ENCODE measurements at regions of chr16 and their contacts with region 1.

Region 1: DNA sequence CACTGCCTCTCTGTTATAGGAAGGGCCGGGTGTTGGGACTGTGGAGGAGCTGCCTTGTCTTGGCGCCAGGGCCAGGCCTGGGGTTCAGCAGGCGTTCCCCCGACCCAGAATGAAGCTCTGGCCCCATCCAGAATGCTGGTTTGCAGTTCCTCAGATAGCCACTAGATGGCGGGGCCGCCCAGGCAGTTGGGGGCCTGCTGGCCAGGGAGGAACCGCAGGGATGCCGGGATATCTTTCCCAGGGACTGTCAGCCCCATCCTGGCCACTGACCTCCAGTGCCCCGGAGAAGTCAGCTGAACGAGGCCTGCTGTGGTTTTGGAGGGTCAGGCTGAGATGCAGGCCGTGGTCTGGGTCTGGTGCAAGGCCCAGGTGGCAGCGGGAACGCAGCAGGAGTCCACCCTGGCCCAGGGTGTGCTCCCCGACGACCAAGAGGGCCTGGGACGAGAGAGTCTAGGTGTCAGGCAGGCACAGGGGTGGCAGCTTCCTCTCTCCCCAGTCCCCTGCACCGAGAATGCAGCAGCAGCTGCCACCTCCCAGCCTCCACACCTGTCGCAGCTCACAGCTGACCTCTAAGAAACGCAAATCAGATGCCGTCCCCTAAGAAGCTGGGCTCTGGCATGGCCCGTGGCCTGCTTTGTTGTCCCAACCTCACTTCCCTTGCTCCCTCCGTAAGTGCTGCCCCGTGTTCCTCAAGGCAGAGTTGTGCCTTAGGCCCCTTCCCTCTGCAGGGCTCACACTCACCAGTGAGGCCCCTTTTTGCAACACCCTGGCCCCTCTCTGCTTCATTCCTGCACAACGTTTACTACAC is 51.2 kb downstream of the RMI2 start:
- DNase-seq: peak; percentile 53 to 88 (median 80)
- ATAC-seq: peak; percentile 41 to 77 (median 68)
- H3K4me3 ChIP-seq: no peak overlapping the region
- H3K27ac ChIP-seq: no peak overlapping the region
- H3K4me1 ChIP-seq: peaks cover 2 to 11% (median 4%) of the 10 kb centered on the region in 3 donors
- H3K27me3 ChIP-seq: no peaks in the 10 kb centered on the region
- CTCF ChIP-seq: peak; percentile 96 to 99 (median 98)

Region 2: DNA sequence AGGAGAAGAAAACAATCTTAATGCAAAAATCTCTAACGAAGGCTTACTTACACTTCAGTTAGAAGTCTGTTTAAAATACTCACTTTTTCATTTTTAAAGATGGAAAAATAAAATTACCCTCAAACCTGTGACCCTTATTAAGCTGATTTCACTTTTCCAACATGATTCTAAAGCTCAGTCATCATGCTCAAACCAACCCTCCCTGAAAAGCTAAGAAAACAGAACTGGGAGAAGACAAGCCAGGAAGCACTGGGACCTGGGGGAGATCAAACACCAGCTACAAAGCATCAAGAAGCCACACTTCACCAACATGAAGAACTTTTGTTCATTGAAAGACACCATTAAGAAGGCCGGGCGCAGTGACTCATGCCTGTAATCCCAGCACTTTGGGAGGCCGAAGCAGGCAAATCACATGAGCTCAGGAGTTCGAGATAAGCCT is 101.4 kb after region 1 on chr16:
- intact Hi-C with region 1: no loop called
- DNase-seq: no peak
- ATAC-seq: no peak
- H3K4me3 ChIP-seq: no peak overlapping the region
- H3K27ac ChIP-seq: peak overlapping the region; percentile 56 to 82 (median 64)
- H3K4me1 ChIP-seq: peaks cover 13 to 25% (median 19%) of the 10 kb centered on the region in 3 donors
- H3K27me3 ChIP-seq: no peaks in the 10 kb centered on the region
- CTCF ChIP-seq: no peak

Region 3: DNA sequence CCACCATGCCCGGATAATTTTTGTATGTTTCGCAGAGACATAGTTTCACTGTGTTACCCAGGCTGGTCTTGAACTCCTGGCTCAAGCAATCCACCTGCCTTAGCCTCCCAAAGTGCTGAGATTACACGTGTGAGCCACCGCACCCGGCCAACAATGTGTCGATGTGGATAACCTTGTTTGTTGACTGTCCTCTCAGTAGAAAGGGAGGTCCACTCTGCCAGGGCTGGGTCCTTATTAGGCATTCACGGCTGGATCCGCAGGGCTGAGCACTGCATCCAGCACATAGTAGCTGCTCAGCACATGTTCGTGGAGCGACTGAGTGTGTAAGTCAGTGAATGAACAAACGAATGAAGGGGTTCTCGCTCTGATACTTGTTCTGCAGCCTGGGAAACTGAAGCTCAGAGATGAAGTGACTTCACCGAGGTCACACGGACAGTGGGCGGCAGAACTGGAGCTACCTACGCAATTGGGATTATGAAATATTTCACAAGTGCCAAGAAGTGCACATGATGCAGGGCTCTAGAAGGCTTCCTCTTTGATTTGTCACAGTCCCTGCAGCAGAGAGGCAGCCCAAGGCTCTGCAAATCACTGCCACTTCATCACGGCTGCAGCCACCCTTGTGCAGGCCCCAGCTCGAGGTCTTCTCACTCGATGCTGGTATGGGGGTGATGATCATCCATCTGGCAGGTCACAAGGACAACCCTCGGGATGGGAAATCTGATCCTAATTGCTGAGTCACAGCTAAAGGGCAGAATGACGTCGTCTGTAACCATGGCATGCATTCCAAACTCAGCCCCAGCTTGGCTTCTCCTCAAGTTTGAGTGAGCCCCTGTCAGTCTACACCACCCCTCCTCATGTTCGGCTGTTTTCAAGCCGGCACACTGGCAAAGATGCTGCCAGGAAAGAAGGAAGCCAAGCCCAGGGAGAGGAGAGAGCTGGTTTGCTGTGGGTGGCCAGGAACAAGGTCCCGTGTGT is 243.8 kb after region 1 on chr16:
- intact Hi-C with region 1: loop called in 1 of 3 experiments (anchors 10 kb)
- DNase-seq: peak; percentile 60 to 86 (median 71)
- ATAC-seq: peak; percentile 72 to 93 (median 82)
- H3K4me3 ChIP-seq: no peak overlapping the region
- H3K27ac ChIP-seq: peak overlapping the region; percentile 54 to 92 (median 72)
- H3K4me1 ChIP-seq: peaks cover 5 to 22% (median 17%) of the 10 kb centered on the region in 3 donors
- H3K27me3 ChIP-seq: no peaks in the 10 kb centered on the region
- CTCF ChIP-seq: no peak

Region 4: GRCh38 chr16:11715246-11715947 is 319.0 kb after region 1 on chr16:
- intact Hi-C with region 1: loop called in 2 of 3 experiments (anchors 10 kb)
- DNase-seq: no peak
- ATAC-seq: peak; percentile 47 to 75 (median 63)
- H3K4me3 ChIP-seq: no peak overlapping the region
- H3K27ac ChIP-seq: peak overlapping the region; percentile 29 to 79 (median 60)
- H3K4me1 ChIP-seq: peaks cover 37 to 50% (median 43%) of the 10 kb centered on the region in 3 donors
- H3K27me3 ChIP-seq: no peaks in the 10 kb centered on the region
- CTCF ChIP-seq: no peak

Region 5: DNA sequence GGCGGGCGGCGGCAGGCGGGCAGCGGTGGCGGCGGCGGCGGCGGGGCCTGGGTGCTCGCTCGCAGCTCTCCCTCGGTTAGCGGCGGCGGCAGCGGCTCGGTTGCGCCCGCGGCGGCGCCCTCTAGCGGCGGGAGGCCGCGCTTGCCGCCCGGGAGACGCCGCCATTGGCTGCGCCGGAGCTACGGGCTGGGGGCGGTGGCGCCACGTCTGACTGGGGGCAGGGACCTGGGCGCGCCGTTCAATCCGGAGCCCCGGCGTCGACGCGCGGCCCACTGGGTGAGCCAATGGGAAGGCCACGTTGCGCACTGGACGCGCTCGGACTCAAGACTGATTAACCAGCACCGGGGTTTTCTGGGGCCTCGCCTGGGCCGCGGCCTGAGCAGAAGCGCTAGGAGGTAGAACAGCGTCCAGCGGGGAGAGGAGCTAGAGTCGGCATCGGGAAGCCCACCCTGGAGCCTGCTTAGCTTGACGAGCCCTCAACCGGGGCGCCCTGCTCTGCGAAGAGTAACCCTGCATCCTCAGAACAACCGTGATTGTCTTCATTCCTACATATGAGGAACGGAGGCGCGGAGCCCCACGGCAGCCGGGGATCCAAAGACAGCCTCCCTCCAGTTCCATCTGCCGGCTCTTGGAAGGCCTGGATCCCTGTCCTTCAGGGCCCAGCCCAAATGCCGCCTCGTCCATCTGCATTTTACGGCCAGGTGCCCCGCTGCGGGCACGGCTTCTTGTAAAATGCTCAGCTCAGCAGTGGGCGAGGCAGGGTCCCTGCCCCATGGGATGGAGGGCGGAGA is 400.9 kb after region 1 on chr16 and contains the start of gene ZC3H7A:
- intact Hi-C with region 1: loop called in 1 of 3 experiments (anchors 10 kb)
- DNase-seq: peak; percentile 97 to 99 (median 97)
- ATAC-seq: peak; percentile 93 to 97 (median 96)
- H3K4me3 ChIP-seq: peak within 1 kb of the TSS; percentile 67 to 92 (median 84)
- H3K27ac ChIP-seq: peak within 1 kb of the TSS; percentile 92 to 97 (median 95)
- H3K4me1 ChIP-seq: peaks cover 20 to 49% (median 42%) of the 10 kb centered on the region in 3 donors
- H3K27me3 ChIP-seq: no peaks in the 10 kb centered on the region
- CTCF ChIP-seq: peak; percentile 73 to 87 (median 84)
- total RNA-seq, gene ZC3H7A: 23.8 to 34.5 (median 30.2) TPM

Region 6: GRCh38 chr16:11806721-11807120 is 410.3 kb after region 1 on chr16:
- intact Hi-C with region 1: loop called in 1 of 3 experiments (anchors 5 kb)
- DNase-seq: no peak
- ATAC-seq: no peak
- H3K4me3 ChIP-seq: no peak overlapping the region
- H3K27ac ChIP-seq: no peak overlapping the region
- H3K4me1 ChIP-seq: no peaks in the 10 kb centered on the region
- H3K27me3 ChIP-seq: no peaks in the 10 kb centered on the region
- CTCF ChIP-seq: no peak

Measured in pancreas (tissue), 10 donors.